Left colon (tissue), 2 donors: ENCODE measurements at regions of chr2 and their contacts with region 1.

Region 1: DNA sequence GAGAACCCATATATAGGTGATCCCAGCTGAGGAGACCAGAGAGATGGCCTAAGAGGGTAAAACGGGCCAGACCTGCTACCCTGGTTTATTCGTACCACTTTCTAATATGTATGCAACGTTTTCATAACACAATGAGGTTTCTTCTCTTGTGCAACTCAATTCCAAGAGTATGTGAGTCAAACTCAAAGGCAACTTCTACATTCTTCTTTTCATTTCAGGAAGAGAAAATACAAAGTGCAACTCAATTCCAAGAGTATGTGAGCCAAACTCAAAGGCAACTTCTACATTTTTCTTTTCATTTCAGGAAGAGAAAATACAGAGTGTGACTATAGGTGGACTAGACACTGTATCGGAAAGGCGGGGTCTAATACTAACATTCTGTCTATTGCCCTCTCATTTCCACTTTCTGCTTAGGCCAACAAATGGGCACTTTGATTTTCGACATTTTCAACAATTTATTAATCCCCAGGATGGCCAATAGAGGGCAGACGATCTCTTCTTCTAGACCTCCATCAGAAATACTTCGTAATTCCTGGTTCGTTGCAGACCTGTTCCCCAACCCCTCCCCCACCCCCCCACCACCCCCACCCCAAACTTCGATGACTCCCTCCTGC is 3.7 kb upstream of the CRIM1 start:
- DNase-seq: no peak
- ATAC-seq: no peak

Region 2: GRCh38 chr2:36507408-36507812 is 155.6 kb after region 1 on chr2:
- intact Hi-C with region 1: loop called in 1 of 2 experiments (anchors 5 kb)
- DNase-seq: peak; percentile 36 to 49
- ATAC-seq: peak; percentile 89

Region 3: DNA sequence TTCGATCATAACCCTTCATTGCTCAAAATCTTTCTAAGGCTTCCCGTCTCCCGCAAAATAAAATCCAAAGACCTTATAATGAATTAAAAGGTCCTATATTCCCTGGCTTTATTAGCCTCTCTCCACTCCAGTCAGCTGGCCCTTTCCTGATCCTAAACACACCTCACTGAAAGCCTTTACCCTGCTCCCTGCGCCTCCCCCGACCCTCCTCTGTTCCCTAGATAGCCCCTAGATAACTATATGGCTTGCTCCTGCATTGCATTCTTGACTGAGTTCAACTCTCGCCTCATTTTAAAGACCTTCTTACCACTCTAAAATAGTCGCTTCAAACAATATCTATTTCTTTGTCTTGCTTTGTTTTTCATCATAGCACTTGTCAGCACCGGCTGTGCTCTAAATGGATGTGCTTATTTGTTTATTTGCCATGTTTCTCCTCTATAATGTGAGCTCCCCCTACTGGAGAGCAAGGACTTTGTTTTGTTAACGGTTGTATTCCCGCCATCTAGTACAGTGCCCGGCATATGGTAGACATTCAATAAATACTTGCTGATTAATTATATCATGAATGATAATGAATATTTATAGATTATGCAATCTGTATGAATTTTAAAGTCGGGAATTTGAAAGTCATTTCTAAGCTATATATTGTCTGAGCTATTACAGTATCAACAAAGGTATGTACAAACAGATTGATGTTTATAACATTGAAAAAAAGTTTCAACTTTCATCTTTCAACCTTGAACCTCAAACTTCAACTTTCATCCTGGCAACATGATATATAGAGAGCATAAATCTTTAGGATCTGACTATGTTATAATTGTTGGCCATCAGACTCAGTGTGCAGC is 312.2 kb after region 1 on chr2:
- intact Hi-C with region 1: loop called in 1 of 2 experiments (anchors 5 kb)
- DNase-seq: no peak
- ATAC-seq: peak; percentile 85

Region 4: GRCh38 chr2:36708041-36708741 is 356.3 kb after region 1 on chr2:
- intact Hi-C with region 1: no loop called
- DNase-seq: no peak
- ATAC-seq: no peak